BJ (cell line): ENCODE measurements at regions of chr1 and their contacts with region 1.

Region 1: DNA sequence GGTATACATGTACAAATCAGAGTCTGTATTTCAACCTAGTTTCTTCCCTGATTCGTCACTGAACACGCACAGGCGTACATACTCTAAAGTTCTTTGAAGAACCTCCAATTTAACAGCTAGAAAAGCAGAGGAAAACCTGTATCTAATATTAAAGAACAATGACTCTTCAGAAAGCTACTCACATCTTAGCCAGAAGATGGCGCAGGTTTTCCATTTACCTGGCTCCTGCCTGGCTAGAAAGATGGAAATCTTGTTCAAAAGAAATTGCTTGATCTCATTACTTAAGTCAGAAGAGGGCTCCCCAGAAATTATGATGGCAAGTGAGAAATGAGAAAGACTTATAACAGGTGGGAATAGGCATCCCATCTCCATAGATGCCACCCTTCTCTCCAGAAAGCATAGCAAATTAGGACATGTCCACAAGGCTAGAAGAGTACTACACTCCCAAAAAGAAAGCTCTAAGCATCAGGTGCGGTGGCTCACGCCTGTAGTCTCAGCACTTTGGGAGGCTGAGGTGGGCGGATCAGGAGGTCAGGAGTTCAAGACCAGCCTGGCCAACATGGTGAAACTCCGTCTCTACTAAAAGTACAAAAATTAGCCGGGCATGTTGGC is 19.0 kb upstream of the L1TD1 start:
- DNase-seq: peak; percentile 10
- H3K4me3 ChIP-seq: no peak overlapping the region
- H3K27me3 ChIP-seq: peaks cover 1% of the 10 kb centered on the region; the same call in 1 of the 2 replicates
- CTCF ChIP-seq: peak; percentile 72

Region 2: GRCh38 chr1:62407405-62408009 is 231.8 kb after region 1 on chr1:
- CTCF ChIA-PET with region 1: interaction called, 191 read pairs
- POLR2A ChIA-PET with region 1: no interaction called
- DNase-seq: no peak
- H3K4me3 ChIP-seq: no peak overlapping the region
- H3K27me3 ChIP-seq: no peaks in the 10 kb centered on the region
- CTCF ChIP-seq: peak; percentile 65

Region 3: DNA sequence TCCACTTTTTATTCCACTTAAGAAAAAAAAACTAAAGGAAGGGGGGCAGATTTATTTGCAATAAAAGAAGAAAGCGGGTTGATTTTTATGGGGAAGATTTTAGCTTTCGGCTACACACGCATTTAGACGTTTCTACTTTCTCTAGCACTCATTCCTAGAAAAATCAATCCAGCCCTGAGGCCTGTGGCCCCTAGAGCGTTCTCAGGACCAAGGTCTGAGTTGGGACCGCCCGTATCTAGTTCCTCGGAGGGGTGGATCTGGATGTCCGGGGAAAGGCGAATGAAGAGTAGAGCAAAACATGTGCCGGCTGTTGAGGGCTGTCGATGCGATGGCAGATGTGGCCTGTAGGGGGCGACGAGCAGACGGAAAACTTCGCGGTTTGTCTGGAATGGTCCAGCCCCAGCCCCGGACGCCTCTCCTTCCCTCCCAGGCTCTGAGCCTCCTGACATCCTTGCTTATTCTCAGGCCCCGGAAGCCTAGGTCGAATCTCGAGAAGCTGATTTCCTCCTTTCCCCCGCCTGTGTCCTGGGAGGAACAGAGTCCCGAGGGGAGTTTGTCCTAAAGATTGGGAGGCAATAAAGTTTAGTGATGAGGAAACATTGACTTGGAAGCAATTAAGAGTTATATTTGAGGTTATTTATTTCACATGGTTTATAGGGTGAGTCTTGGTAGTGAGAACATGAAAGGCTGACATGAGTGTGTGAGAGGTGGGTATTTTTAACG is 1151.9 kb after region 1 on chr1:
- CTCF ChIA-PET with region 1: no interaction called
- POLR2A ChIA-PET with region 1: no interaction called
- DNase-seq: no peak
- H3K4me3 ChIP-seq: no peak overlapping the region
- H3K27me3 ChIP-seq: peaks cover 53% of the 10 kb centered on the region
- CTCF ChIP-seq: peak; percentile 78